ENCODE measurements at regions of chr4 and their contacts with region 1.

Region 1: GRCh38 chr4:184395971-184396391 is 78.4 kb downstream of the IRF2 start:
- DNase-seq: no peak
- ATAC-seq: peak; percentile 77
- H3K4me3 Mint-ChIP-seq: peak overlapping the region; percentile 81
- H3K27ac Mint-ChIP-seq: peak overlapping the region; percentile 95
- H3K4me1 Mint-ChIP-seq: peaks cover 46% of the 10 kb centered on the region
- H3K27me3 Mint-ChIP-seq: no peaks in the 10 kb centered on the region
- CTCF ChIP-seq: no peak

Region 2: DNA sequence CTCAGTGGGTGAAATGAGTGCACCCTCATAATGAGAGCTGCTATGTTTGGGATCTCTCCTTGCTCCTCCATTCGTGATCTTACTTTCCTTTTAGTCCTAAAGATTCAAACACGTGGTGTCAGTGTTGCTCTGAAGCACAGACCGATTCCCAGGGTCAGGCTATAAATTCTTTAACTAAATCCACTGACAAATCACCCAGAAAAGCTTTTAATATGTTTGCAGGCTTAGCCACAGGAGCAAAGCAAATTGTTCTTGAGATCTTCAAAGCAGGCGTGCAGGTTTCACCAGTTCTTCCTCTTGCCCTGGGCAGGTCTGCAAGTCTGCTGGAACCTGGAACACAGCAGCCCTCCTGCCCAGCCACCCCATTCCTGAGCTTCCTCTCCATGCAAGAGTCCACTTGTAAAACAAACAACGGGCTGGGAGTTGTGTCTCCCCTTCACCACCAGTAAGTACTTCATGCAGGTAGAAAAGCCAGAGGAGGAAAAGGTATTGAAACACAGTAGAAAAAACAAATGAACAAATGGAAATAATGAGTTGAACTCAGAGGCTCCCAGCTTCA is 108.2 kb before region 1 on chr4:
- CTCF ChIA-PET with region 1: interaction called, 7 read pairs
- POLR2A ChIA-PET with region 1: interaction called, 22 read pairs
- intact Hi-C with region 1: loop called (anchors 1 kb)
- DNase-seq: no peak
- ATAC-seq: no peak
- H3K4me3 Mint-ChIP-seq: peak overlapping the region; percentile 77
- H3K27ac Mint-ChIP-seq: peak overlapping the region; percentile 91
- H3K4me1 Mint-ChIP-seq: peaks cover 61% of the 10 kb centered on the region
- H3K27me3 Mint-ChIP-seq: no peaks in the 10 kb centered on the region
- CTCF ChIP-seq: no peak

Region 3: DNA sequence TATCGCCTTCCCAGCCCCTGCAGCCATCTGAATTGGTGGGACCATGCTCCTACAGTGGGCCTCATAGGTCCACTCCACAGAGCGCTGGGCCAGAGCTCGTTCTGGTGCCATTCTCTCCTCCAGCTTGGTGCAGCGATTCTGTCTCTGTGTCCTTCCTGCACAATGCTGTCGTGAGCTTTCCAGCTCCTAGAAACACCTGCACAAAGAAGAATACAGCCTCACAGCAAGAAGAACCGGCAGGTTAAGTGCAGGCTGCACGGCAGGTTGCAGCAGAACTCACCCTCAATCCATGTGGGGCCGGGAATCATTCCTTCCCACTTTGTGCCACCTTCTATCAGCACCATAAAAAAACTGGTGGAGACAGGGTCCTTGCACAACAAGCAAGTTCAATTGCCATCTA is 77.1 kb before region 1 on chr4:
- CTCF ChIA-PET with region 1: interaction called, 3 read pairs
- POLR2A ChIA-PET with region 1: interaction called, 20 read pairs
- intact Hi-C with region 1: loop called (anchors 1 kb)
- DNase-seq: no peak
- ATAC-seq: no peak
- H3K4me3 Mint-ChIP-seq: peak overlapping the region; percentile 24
- H3K27ac Mint-ChIP-seq: peak overlapping the region; percentile 98
- H3K4me1 Mint-ChIP-seq: peaks cover 73% of the 10 kb centered on the region
- H3K27me3 Mint-ChIP-seq: no peaks in the 10 kb centered on the region
- CTCF ChIP-seq: no peak

Region 4: DNA sequence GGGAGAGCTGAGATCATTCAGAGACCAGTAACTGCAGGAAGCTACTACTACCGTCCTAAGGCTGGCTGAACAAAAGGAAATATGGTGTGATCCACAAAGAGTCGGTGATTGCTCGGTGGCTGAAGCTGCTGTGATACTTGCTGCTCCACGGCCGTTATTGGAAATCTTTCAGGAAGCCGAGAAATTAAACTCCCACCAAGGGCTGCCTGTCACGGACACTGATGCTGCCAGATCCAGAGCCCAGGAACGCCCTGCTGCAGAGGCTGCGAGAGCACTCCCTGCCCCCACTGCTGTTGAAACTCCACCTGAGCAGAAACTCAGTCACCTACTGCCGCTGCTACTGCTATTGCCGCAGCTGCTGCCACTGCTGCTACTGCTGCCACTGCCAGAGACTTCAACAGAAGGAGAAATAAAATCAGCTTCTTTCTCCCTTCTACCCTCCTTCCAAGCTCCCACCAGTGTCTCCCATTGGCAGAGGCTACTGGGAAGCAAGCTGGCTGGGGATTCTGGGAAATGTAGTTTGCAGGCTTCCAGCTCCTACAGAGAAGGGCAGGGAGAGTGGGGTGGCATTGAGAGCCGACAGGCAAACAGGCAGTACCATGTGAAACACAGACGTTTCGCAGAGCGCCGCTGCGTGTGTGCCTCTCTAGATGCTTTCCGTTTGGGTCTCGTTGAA is 52.3 kb before region 1 on chr4:
- CTCF ChIA-PET with region 1: no interaction called
- POLR2A ChIA-PET with region 1: interaction called, 18 read pairs
- intact Hi-C with region 1: no loop called
- DNase-seq: peak; percentile 39
- ATAC-seq: peak; percentile 50
- H3K4me3 Mint-ChIP-seq: peak overlapping the region; percentile 86
- H3K27ac Mint-ChIP-seq: peak overlapping the region; percentile 83
- H3K4me1 Mint-ChIP-seq: peaks cover 73% of the 10 kb centered on the region
- H3K27me3 Mint-ChIP-seq: no peaks in the 10 kb centered on the region
- CTCF ChIP-seq: no peak

Region 5: GRCh38 chr4:184408021-184408710 is 12.2 kb after region 1 on chr4:
- CTCF ChIA-PET with region 1: interaction called, 4 read pairs
- POLR2A ChIA-PET with region 1: interaction called, 15 read pairs
- intact Hi-C with region 1: loop called (anchors 1 kb)
- DNase-seq: no peak
- ATAC-seq: no peak
- H3K4me3 Mint-ChIP-seq: no peak overlapping the region
- H3K27ac Mint-ChIP-seq: peak overlapping the region; percentile 41
- H3K4me1 Mint-ChIP-seq: peaks cover 65% of the 10 kb centered on the region
- H3K27me3 Mint-ChIP-seq: no peaks in the 10 kb centered on the region
- CTCF ChIP-seq: no peak

Region 6: GRCh38 chr4:184733654-184734524 is 337.9 kb after region 1 on chr4 and contains the start of gene CENPU:
- CTCF ChIA-PET with region 1: interaction called, 3 read pairs
- POLR2A ChIA-PET with region 1: no interaction called
- intact Hi-C with region 1: loop called (anchors 5 kb)
- DNase-seq: peak; percentile 95
- ATAC-seq: peak; percentile 96
- H3K4me3 Mint-ChIP-seq: peak within 1 kb of the TSS; percentile 88
- H3K27ac Mint-ChIP-seq: peak within 1 kb of the TSS; percentile 85
- H3K4me1 Mint-ChIP-seq: peaks cover 19% of the 10 kb centered on the region
- H3K27me3 Mint-ChIP-seq: no peaks in the 10 kb centered on the region
- CTCF ChIP-seq: no peak
- total RNA-seq, gene CENPU: 7.0 and 7.1 TPM in 2 replicates